A549 (cell line): ENCODE measurements at regions of chr20 and their contacts with region 1.

Region 1: DNA sequence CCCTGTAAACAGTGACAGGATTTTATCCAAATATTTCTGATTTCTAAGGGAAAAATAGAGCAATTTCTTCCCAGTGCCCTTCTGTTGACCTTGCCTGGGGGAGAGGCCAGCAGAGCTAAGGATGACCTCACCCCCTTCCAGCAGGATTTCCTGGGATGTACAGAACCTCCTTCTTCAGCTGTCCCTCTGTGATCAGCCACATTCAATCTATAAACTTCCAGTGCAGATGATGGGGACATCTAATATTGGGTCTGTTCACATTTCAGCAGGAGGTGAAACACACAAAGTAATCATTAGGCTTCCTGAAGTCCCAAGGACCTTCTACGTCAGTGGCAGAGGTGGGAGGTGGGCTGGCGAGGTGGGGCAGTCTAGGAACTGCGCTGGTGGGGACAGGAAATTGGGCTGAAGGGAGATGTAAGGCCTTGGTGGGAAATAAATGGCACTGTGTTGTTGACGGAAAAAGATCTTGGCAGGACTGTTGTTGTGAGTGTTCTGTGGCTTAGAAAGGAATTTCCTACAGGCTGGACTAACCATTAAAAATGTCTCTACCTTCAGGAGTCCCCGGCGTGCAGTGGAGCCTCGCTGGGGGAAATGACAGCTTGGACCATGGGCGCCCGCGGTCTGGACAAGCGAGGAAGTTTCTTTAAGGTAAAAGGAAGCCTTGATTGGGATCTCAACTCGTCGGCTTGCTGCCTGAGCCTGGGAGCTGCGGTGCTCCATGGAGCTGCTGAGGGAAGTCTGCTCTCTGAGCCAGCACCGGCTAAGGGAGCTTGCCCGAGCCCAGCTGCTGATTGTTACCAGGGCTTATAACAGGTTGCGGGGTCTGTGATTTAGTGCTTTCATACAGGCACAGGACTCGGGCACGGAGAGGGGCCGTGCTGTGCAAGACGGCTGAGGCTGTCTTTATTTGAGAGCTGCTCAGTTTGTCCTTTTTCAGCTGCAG is 127.9 kb upstream of the NAA20 start:
- DNase-seq: peak in 1 of 2 experiments; percentile 48
- ATAC-seq: 0 out of 6 replicates have a peak, but pooled peaks of 1 of the 2 experiments have one; percentile 9
- H3K4me3 ChIP-seq: peak overlapping the region; percentile 31; the same call in 2 of the 3 replicates
- H3K27ac ChIP-seq: peak overlapping the region; percentile 92 to 97
- H3K4me1 ChIP-seq: peaks cover 61% of the 10 kb centered on the region
- CTCF ChIP-seq: no peak
- EP300 ChIP-seq: no peak
- POLR2A ChIP-seq: no peak
- RAD21 ChIP-seq: no peak

Region 2: GRCh38 chr20:19791887-19792286 is 97.4 kb before region 1 on chr20:
- CTCF ChIA-PET with region 1: interaction called, 130 read pairs
- POLR2A ChIA-PET with region 1: interaction called, 23 read pairs
- DNase-seq: no peak
- ATAC-seq: no peak
- H3K4me3 ChIP-seq: no peak overlapping the region
- H3K27ac ChIP-seq: no peak overlapping the region
- H3K4me1 ChIP-seq: no peaks in the 10 kb centered on the region
- CTCF ChIP-seq: no peak
- EP300 ChIP-seq: no peak
- POLR2A ChIP-seq: no peak
- RAD21 ChIP-seq: no peak

Region 3: DNA sequence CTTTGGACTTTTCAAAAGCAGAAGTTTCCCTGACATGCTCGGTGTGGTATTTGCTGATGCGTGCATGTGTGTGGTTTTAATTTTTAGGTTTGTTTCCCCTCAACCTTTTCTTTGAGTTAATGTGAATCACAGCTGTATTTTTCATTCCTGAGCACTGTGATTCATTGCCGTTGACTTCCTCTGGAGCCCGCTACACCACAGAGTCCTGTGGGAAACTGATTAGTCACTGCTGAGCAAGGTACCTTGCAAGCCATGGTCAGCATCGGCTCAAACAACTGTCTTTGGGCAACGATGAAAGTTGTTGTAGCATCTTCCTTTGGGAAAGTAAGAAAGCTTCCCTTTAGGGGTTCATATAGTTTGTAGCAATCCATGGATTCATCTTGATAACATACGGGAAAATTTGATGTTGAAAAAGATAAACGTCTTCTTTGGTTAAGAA is 73.7 kb before region 1 on chr20:
- CTCF ChIA-PET with region 1: interaction called, 46 read pairs
- POLR2A ChIA-PET with region 1: interaction called, 25 read pairs
- DNase-seq: peak; percentile 95 to 96
- ATAC-seq: peak; percentile 99 to 100
- H3K4me3 ChIP-seq: no peak overlapping the region
- H3K27ac ChIP-seq: peak overlapping the region; percentile 80 to 89
- H3K4me1 ChIP-seq: peaks cover 40% of the 10 kb centered on the region
- CTCF ChIP-seq: peak; percentile 14; the same call in 2 of the 3 replicates
- EP300 ChIP-seq: peak; percentile 75 to 89; a peak in 3 of 5 replicates
- POLR2A ChIP-seq: no peak
- RAD21 ChIP-seq: peak; percentile 57 to 75

Region 4: GRCh38 chr20:19903168-19903811 is 14.0 kb after region 1 on chr20:
- CTCF ChIA-PET with region 1: interaction called, 16 read pairs
- POLR2A ChIA-PET with region 1: no interaction called
- DNase-seq: peak in 1 of 2 experiments; percentile 52
- ATAC-seq: peak in 1 of 2 experiments; percentile 51; a peak in 3 of 6 replicates
- H3K4me3 ChIP-seq: no peak overlapping the region
- H3K27ac ChIP-seq: 0 out of 6 replicates have a peak overlapping the region, but pooled peaks of 1 of the 2 experiments have one; percentile 24
- H3K4me1 ChIP-seq: peaks cover 15% of the 10 kb centered on the region
- CTCF ChIP-seq: no peak
- EP300 ChIP-seq: no peak
- POLR2A ChIP-seq: no peak
- RAD21 ChIP-seq: peak in 1 of 2 experiments; percentile 45; a peak in 2 of 5 replicates

Region 5: GRCh38 chr20:19995220-19995863 is 106.1 kb after region 1 on chr20:
- CTCF ChIA-PET with region 1: interaction called, 53 read pairs
- POLR2A ChIA-PET with region 1: interaction called, 6 read pairs
- DNase-seq: peak; percentile 55 to 61
- ATAC-seq: no peak
- H3K4me3 ChIP-seq: no peak overlapping the region
- H3K27ac ChIP-seq: peak overlapping the region; percentile 90 to 93
- H3K4me1 ChIP-seq: peaks cover 51% of the 10 kb centered on the region
- CTCF ChIP-seq: peak; percentile 94
- EP300 ChIP-seq: no peak
- POLR2A ChIP-seq: no peak
- RAD21 ChIP-seq: peak; percentile 92 to 93

Region 6: GRCh38 chr20:20023395-20023794 is 134.1 kb after region 1 on chr20:
- CTCF ChIA-PET with region 1: no interaction called
- POLR2A ChIA-PET with region 1: no interaction called
- DNase-seq: no peak
- ATAC-seq: no peak
- H3K4me3 ChIP-seq: no peak overlapping the region
- H3K27ac ChIP-seq: no peak overlapping the region
- H3K4me1 ChIP-seq: peaks cover 18% of the 10 kb centered on the region
- CTCF ChIP-seq: no peak
- EP300 ChIP-seq: no peak
- POLR2A ChIP-seq: no peak
- RAD21 ChIP-seq: no peak